ENCODE measurements at regions of chr3 and their contacts with region 1.

Region 1: DNA sequence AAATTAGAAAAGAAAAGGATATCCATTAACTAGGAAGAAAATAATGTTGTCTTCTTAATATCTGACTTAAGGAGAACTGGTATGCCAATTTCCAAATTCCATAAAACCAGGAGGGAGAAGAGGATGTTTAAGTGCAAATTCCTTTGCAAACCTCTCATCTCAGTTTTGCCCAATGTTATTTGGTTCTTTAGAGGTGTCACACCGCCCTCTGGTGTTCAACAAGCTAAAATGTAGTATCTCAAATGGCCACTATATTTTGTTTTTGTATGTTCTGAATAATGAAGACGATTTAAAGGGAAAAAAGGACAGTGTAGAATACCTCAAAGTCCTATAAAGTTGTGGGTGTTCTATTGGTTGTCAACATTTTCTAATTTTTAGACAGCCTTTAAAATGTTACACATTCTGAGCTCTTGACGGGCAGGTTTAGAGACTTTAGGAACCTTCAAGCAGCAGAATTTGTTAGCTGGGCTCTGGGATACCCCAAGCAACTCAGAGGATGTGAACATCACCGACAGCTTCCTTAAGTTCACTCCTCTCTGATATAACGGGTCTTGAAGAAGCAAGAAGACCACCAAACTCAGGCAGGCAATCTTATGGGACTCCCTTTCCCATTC is 458.3 kb downstream of the MFSD1 start:
- DNase-seq: peak; percentile 45 to 57
- H3K4me3 ChIP-seq: no peak overlapping the region
- H3K27ac ChIP-seq: no peak overlapping the region
- H3K4me1 ChIP-seq: no peaks in the 10 kb centered on the region
- H3K27me3 ChIP-seq: no peaks in the 10 kb centered on the region
- CTCF ChIP-seq: peak; percentile 91

Region 2: DNA sequence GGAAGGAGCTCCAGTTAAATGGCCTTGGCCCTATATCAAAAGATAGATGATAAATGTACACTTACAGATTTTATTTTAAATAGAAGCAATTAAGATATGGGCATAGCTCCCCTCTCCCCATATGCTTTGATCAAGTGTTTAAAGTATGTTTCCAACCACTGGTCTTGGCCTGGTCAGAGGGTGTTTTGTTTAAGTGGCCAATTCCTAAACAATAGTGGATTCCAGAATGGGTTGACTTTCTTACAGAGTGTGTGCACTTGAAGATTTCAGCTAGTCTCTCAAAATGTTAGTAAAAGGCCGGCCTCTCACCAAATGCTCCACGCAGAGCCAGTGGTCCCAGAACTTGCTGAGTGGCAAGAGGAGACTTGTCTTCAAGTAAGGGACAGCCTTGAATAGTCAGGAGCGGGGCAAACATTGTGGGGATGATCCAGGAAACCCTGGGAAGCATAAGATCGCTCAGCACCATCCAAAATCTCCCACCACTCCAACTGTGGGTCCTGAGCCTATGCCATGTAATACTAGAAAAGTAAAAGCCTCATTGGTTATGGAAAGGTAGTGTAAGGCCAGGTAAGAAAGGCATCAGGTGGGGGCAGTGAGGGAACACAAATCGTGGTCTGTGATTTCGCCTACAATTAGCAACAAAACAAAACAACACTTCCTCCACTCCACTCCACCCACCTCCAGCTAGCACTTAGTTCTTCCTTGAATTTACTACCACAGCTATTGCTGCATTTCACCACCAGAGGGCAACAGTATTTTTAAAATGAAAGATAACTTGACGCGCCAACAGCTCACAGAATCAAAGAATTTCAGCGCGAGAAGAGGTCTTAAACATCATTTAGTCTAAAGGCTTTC is 532.7 kb before region 1 on chr3:
- CTCF ChIA-PET with region 1: no interaction called
- POLR2A ChIA-PET with region 1: no interaction called
- intact Hi-C with region 1: loop called (anchors 5 kb)
- DNase-seq: peak; percentile 54 to 74
- H3K4me3 ChIP-seq: peak overlapping the region; percentile 30; the same call in 1 of the 2 replicates
- H3K27ac ChIP-seq: peak overlapping the region; percentile 78
- H3K4me1 ChIP-seq: peaks cover 80% of the 10 kb centered on the region
- H3K27me3 ChIP-seq: no peaks in the 10 kb centered on the region
- CTCF ChIP-seq: peak; percentile 94

Region 3: DNA sequence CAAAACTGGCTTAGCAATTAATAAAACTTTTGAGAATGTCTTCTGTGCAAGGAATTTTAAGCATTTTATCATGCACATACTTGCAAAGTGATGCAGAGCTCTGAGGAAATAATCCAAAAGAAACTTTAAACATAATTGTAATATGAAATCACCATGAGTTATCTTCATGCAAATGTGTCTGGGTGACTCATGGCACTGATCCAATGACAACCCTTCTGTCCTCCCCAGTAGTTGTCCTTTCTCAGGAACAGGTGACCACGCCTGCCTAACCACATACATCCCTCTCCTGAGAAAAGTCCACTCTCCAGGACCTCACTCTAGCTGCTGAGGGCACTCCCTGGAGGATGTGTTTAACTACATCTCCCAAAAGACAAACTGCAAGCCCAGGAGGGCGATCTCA is 197.9 kb after region 1 on chr3:
- CTCF ChIA-PET with region 1: no interaction called
- POLR2A ChIA-PET with region 1: no interaction called
- intact Hi-C with region 1: loop called (anchors 2 kb)
- DNase-seq: peak; percentile 92 to 96
- H3K4me3 ChIP-seq: no peak overlapping the region
- H3K27ac ChIP-seq: peak overlapping the region; percentile 63
- H3K4me1 ChIP-seq: peaks cover 25% of the 10 kb centered on the region
- H3K27me3 ChIP-seq: no peaks in the 10 kb centered on the region
- CTCF ChIP-seq: no peak

Region 4: DNA sequence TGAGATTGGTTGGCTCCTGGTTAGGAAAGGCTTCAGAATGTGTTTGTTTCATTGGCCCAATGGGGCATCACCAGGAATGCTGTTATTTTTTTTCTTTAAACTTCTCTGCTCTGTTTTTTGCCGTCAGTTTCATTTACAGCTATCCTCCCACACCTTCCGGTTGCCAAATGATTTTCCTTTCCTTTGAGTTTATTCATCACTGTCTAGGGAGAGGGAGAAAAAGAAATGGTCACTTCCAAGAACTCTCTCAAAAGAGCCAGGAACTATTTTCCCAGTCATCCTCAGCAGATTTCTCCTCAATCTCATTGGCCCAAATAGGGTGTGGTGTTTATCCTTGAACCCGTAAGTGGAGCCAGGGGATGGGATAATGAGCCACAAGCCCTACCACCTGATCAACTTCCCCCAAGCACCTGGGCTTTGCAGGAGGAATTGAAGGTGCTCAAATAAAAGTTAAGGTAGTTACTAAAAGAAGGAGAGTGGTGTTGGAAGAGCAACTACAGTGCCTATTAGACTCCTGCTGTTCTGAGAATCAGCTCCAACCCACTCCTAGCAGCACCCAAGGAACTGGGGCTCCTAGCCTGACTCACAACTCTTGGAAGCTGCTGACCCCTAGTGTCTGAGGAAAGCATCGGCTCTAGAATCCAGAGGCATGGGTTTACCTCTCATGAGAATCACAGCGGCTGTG is 544.7 kb after region 1 on chr3:
- CTCF ChIA-PET with region 1: interaction called, 4 read pairs
- POLR2A ChIA-PET with region 1: interaction called, 4 read pairs
- intact Hi-C with region 1: loop called (anchors 1 kb)
- DNase-seq: peak; percentile 73
- H3K4me3 ChIP-seq: no peak overlapping the region
- H3K27ac ChIP-seq: no peak overlapping the region
- H3K4me1 ChIP-seq: no peaks in the 10 kb centered on the region
- H3K27me3 ChIP-seq: no peaks in the 10 kb centered on the region
- CTCF ChIP-seq: peak; percentile 93

Region 5: DNA sequence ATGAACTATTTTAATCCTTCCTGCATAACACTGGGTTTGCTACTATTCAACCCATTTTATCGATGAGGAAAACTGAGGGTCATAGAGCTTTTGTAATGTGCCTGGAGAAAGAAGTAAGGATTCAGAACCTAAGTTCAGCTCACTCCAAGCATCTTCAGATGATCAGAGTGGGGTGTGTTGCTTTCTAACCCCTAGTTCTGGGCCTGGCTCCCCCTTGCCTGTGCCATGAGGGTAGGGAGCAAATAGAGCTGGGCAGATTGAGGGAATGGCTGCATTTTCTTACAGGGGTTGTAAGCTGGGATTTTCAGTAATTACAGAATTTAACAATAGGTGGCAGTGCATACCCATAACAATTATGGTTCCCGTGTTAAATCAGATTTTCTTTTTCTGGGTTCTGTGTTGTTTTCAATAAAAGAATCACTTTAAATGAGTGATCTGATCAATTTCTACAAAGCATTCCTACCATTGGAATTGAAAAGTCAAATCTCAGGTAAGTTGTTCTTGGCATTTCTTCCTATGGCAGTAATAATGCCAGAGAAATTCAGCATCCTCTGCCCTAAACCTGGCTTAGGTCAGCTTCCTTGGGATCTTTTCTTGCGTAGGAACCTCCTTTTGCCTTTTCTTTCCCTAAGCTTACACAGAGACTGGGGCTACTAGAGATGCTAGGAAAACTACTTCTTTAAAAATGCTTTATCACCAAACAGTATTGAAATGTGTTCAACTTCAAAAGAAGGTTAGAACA is 624.7 kb after region 1 on chr3:
- CTCF ChIA-PET with region 1: interaction called, 3 read pairs
- POLR2A ChIA-PET with region 1: no interaction called
- intact Hi-C with region 1: loop called (anchors 1 kb)
- DNase-seq: peak; percentile 15 to 45
- H3K4me3 ChIP-seq: no peak overlapping the region
- H3K27ac ChIP-seq: no peak overlapping the region
- H3K4me1 ChIP-seq: no peaks in the 10 kb centered on the region
- H3K27me3 ChIP-seq: no peaks in the 10 kb centered on the region
- CTCF ChIP-seq: peak; percentile 85

Region 6: DNA sequence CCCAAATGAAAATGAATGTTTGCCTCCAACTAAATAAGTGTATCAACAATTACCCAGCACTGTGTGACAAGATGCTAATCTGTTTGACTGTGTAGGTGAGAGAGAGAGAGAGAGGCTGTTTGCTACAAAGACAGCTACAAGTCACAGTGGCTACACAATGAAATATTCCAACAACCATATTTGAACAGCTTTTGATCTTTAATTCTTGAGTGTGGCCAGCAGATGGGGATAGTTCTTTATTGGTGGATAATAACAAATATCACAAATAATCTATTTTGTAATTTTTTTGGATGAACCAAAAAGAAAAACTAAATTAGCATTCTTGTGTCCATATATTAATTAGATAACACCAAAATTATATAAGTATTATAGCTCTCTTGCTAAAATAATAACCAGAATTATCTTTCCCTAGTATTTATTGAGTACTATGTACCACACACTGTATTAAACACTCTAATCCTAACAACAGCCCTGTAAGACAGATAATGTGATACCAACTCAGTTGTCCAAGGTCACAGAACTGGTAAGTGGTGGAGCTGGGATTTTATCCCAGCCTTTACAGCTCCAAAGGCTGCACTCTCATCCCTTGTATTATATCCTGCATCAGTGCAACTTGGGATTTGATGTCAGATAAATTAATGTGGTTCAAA is 903.2 kb after region 1 on chr3:
- CTCF ChIA-PET with region 1: no interaction called
- POLR2A ChIA-PET with region 1: no interaction called
- intact Hi-C with region 1: loop called (anchors 5 kb)
- DNase-seq: no peak
- H3K4me3 ChIP-seq: no peak overlapping the region
- H3K27ac ChIP-seq: no peak overlapping the region
- H3K4me1 ChIP-seq: no peaks in the 10 kb centered on the region
- H3K27me3 ChIP-seq: no peaks in the 10 kb centered on the region
- CTCF ChIP-seq: peak; percentile 72